Activated CD4-positive, alpha-beta memory T cell treated with anti-CD3 and anti-CD28 coated beads for 36 hours (primary cell): ENCODE measurements at regions of chr17 and their contacts with region 1.

Region 1: DNA sequence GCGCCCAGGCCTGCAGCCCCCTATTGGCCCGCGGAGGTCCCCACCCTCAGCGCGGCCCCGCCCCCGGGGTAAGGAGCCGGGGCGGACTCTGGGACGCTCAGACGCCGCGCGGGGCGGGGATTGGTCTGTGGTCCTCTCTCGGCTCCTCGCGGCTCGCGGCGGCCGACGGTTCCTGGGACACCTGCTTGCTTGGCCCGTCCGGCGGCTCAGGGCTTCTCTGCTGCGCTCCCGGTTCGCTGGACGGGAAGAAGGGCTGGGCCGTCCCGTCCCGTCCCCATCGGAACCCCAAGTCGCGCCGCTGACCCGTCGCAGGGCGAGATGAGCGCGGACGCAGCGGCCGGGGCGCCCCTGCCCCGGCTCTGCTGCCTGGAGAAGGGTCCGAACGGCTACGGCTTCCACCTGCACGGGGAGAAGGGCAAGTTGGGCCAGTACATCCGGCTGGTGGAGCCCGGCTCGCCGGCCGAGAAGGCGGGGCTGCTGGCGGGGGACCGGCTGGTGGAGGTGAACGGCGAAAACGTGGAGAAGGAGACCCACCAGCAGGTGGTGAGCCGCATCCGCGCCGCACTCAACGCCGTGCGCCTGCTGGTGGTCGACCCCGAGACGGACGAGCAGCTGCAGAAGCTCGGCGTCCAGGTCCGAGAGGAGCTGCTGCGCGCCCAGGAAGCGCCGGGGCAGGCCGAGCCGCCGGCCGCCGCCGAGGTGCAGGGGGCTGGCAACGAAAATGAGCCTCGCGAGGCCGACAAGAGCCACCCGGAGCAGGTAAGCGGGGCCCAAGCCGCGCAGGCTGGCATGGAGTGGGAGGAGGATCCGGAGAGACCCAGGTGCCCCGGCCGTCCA is at the start of gene NHERF1:
- DNase-seq: peak; percentile 96
- H3K4me3 Mint-ChIP-seq: peak within 1 kb of the TSS; percentile 84
- H3K27ac Mint-ChIP-seq: peak within 1 kb of the TSS; percentile 85
- H3K4me1 Mint-ChIP-seq: peaks cover 52% of the 10 kb centered on the region
- H3K27me3 Mint-ChIP-seq: no peaks in the 10 kb centered on the region
- total RNA-seq, gene NHERF1: 136 TPM

Region 2: GRCh38 chr17:74212913-74213791 is 535.6 kb before region 1 on chr17 and contains the start of gene TTYH2:
- CTCF ChIA-PET with region 1: no interaction called
- POLR2A ChIA-PET with region 1: no interaction called
- intact Hi-C with region 1: loop called (anchors 10 kb)
- DNase-seq: peak; percentile 82
- H3K4me3 Mint-ChIP-seq: peak within 1 kb of the TSS; percentile 74
- H3K27ac Mint-ChIP-seq: peak within 1 kb of the TSS; percentile 36
- H3K4me1 Mint-ChIP-seq: peaks cover 68% of the 10 kb centered on the region
- H3K27me3 Mint-ChIP-seq: no peaks in the 10 kb centered on the region
- total RNA-seq, gene TTYH2: 7.6 to 7.9 TPM

Region 3: GRCh38 chr17:74690409-74690825 is 58.3 kb before region 1 on chr17:
- CTCF ChIA-PET with region 1: no interaction called
- POLR2A ChIA-PET with region 1: no interaction called
- intact Hi-C with region 1: no loop called
- DNase-seq: no peak
- H3K4me3 Mint-ChIP-seq: no peak overlapping the region
- H3K27ac Mint-ChIP-seq: no peak overlapping the region
- H3K4me1 Mint-ChIP-seq: peaks cover 4% of the 10 kb centered on the region
- H3K27me3 Mint-ChIP-seq: no peaks in the 10 kb centered on the region

Region 4: DNA sequence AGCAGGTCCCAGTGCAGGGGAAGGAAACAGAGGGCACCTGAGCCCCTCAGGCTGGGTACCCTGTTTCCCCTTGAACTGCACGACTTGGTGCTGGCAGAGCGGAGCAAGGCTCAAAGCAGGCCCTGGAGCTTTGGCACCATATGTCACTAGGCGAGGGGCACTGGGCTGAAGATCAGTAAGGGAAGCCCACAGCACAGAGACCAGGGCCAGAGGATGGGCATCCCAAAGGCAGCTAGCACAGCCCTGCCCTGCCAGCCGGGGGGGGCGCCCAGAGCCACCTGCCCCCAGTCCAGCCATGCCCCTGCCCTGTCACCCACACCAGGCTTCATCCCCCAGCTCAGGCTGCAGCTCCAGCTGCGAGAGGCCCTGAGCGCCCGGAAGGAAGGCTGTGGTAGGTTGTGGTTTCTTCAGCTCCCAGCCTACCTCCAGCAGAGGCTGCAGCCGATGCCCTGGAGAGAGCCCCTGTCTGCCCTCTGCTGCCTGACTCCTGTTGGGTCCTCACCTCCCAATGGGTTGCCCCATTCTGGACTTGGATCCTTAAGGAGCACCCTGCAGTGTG is 10.6 kb after region 1 on chr17:
- CTCF ChIA-PET with region 1: interaction called, 75 read pairs
- POLR2A ChIA-PET with region 1: interaction called, 16 read pairs
- intact Hi-C with region 1: loop called (anchors 1 kb)
- DNase-seq: peak; percentile 73
- H3K4me3 Mint-ChIP-seq: peak overlapping the region; percentile 23
- H3K27ac Mint-ChIP-seq: peak overlapping the region; percentile 85
- H3K4me1 Mint-ChIP-seq: peaks cover 69% of the 10 kb centered on the region
- H3K27me3 Mint-ChIP-seq: no peaks in the 10 kb centered on the region

Region 5: DNA sequence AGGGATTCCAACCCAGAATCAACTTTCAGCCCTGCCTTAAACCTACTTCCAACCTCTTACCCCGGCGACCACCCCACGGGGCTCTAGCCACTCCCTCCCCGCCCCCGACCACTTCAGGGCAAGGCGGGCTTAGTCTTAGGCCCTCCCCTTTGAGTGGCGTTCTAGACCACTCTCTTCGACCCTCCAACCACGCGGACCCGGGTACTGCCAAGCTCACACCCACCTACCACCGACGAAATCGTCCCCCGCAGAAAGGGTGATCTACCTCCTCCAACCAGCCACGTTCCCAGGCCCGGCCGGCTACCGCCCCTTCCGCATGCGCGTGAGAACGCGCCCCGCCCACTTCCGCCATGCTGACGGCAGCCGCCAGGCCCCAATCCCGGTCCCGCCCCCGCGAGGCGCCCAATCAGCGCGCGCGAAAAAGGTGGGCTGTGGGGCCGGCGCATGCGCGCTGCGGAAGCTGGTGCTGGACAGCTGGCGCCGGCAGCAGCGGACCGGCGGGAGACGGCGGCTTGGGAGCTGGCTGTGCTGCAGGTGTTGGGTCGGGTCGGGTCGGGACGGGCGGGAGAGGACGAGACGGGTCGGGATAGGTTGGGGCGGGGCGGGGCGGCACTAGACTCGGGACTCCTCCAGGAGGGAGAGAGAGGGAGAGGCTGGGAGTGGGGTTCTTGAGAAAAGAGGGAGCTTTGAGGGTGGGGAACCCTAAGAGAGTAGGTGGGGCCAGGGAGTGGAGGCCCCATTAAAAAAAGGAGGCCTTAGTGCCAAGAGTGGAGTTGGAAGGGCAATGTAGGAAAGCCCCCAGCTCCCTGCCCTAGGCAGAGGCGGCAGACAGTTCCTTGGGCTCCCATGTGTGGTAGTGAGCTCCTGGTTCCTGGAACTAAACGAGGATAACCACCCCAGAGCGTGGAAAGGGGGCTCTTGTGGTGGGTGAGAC is 27.6 kb after region 1 on chr17 and contains the start of gene NAT9:
- CTCF ChIA-PET with region 1: interaction called, 176 read pairs
- POLR2A ChIA-PET with region 1: interaction called, 24 read pairs
- intact Hi-C with region 1: loop called (anchors 1 kb)
- DNase-seq: peak; percentile 99
- H3K4me3 Mint-ChIP-seq: peak within 1 kb of the TSS; percentile 97
- H3K27ac Mint-ChIP-seq: peak within 1 kb of the TSS; percentile 89
- H3K4me1 Mint-ChIP-seq: peaks cover 71% of the 10 kb centered on the region
- H3K27me3 Mint-ChIP-seq: no peaks in the 10 kb centered on the region
- total RNA-seq, gene NAT9: 42.9 to 46.9 TPM

Region 6: GRCh38 chr17:74864866-74865395 is 116.2 kb after region 1 on chr17:
- CTCF ChIA-PET with region 1: interaction called, 123 read pairs
- POLR2A ChIA-PET with region 1: no interaction called
- intact Hi-C with region 1: loop called (anchors 5 kb)
- DNase-seq: peak; percentile 81
- H3K4me3 Mint-ChIP-seq: no peak overlapping the region
- H3K27ac Mint-ChIP-seq: no peak overlapping the region
- H3K4me1 Mint-ChIP-seq: peaks cover 12% of the 10 kb centered on the region
- H3K27me3 Mint-ChIP-seq: peaks cover 16% of the 10 kb centered on the region